Left cardiac atrium (tissue), 4 donors: ENCODE measurements at regions of chr9 and their contacts with region 1.

Region 1: DNA sequence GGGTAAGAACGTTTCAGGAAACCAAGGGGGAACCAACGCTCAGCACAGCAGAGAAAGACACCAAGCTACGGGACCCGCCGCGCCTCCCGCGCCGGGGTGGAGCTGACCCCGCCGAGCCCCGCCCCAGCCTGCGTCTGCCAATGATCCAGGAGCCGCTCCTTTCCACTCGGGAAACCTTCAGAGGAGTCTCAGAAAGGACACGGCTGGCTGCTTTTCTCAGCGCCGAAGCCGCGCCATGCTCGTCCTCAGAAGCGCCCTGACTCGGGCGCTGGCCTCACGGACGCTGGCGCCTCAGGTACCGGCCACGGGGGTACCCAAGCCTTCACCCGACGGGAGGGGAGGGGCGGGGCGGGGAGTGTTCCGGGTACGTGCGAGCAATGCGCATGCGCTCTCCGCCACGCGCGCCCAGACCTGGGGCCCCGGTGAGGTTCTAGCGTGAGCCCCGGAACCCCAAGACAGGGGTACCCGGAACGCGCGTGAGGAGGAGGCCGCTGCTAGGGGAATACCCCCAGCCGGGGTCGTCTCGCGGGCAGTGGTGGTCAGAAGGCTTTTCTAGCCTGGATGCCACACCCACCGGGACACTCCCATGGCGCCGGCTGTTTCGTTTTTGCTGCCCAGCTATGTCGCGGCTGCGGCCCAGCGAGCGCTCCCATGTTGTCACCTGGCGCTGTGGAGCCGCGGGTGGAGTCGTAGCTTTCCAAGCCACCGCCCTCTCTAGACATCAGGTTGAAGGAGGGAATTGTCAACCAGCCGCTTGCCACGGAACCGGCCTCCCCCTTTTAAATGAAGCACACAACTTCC is at the start of gene NIPSNAP3A:
- DNase-seq: peak; percentile 90
- ATAC-seq: peak; percentile 95 to 97
- total RNA-seq, gene NIPSNAP3A: 15.4 to 20.3 TPM

Region 2: GRCh38 chr9:104138243-104138868 is 609.4 kb before region 1 on chr9:
- intact Hi-C with region 1: loop called in 1 of 2 experiments (anchors 10 kb)
- DNase-seq: no peak
- ATAC-seq: no peak

Region 3: DNA sequence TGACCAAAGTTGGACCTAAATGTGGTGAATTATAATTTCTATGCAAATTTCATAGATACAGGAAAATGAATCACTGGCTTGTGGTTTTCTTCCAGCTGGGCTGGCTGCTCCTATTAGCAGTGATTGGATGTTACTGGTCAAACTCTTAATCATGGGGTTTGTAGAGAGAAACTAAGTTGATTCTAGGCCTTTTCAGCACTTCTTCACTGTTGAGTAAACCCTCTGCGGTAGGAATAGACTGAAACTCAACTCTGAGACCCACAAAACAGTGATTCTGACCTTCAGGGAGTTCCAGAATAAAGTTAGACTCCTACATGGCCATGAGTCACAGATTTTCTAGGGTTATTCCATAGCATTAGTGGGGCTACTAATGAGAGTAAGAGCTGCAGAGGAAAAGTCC is 762.3 kb after region 1 on chr9:
- intact Hi-C with region 1: no loop called
- DNase-seq: no peak
- ATAC-seq: no peak